ENCODE measurements at regions of chr1 and their contacts with region 1.

Region 1: GRCh38 chr1:31444725-31445448 is 31.9 kb downstream of the SERINC2 start:
- DNase-seq: peak; percentile 97
- ATAC-seq: peak; percentile 68
- H3K4me3 ChIP-seq: peak overlapping the region in 1 of 3 experiments; percentile 23; a peak in 1 of 6 replicates
- H3K27ac ChIP-seq: peak overlapping the region; percentile 78
- H3K4me1 ChIP-seq: peaks cover 97% of the 10 kb centered on the region
- H3K27me3 ChIP-seq: no peaks in the 10 kb centered on the region
- CTCF ChIP-seq: no peak
- EP300 ChIP-seq: peak in 1 of 2 experiments; percentile 92; a peak in 2 of 4 replicates
- POLR2A ChIP-seq: no peak
- RAD21 ChIP-seq: no peak

Region 2: GRCh38 chr1:31434171-31434871 is 10.6 kb before region 1 on chr1:
- CTCF ChIA-PET with region 1: no interaction called
- POLR2A ChIA-PET with region 1: interaction called, 16 read pairs
- in situ Hi-C with region 1: no loop called
- intact Hi-C with region 1: no loop called
- DNase-seq: peak; percentile 83
- ATAC-seq: peak; percentile 77
- H3K4me3 ChIP-seq: no peak overlapping the region
- H3K27ac ChIP-seq: peak overlapping the region; percentile 76
- H3K4me1 ChIP-seq: peaks cover 90% of the 10 kb centered on the region
- H3K27me3 ChIP-seq: no peaks in the 10 kb centered on the region
- CTCF ChIP-seq: peak; percentile 55
- EP300 ChIP-seq: peak in 1 of 2 experiments; percentile 88; a peak in 2 of 4 replicates
- POLR2A ChIP-seq: peak in 1 of 2 experiments; percentile 44; a peak in 1 of 4 replicates
- RAD21 ChIP-seq: no peak

Region 3: DNA sequence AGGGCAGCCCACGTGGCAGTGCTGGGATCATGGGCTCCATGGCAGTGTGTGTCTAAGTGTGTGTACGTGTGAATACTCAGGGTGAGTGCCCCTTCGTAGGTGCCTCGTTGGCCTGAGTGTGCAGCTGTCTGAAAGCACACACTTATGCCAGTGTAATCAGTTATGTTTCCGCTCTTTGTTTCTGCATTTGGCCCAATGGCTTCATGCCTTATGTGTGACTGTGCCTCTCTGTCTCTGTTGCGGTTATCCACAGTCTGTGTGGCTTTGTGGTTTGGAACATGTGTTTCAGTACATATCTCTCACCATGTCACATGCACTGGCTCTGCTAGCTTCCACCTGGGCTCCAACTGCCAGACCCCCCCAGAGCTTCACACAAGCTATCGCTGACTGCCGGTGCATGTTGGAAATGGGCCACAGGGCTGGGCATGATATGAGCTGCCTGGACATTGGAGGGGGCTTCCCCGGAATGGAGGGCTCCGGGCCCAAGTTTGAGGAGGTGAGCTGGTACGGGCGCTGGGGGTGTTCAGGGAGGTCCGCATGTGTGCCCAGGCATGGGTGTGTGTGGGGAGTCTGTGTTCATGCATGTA is 61.1 kb after region 1 on chr1:
- CTCF ChIA-PET with region 1: no interaction called
- POLR2A ChIA-PET with region 1: interaction called, 18 read pairs
- in situ Hi-C with region 1: no loop called
- intact Hi-C with region 1: loop called (anchors 10 kb)
- DNase-seq: no peak
- ATAC-seq: no peak
- H3K4me3 ChIP-seq: no peak overlapping the region
- H3K27ac ChIP-seq: no peak overlapping the region
- H3K4me1 ChIP-seq: peaks cover 70% of the 10 kb centered on the region
- H3K27me3 ChIP-seq: no peaks in the 10 kb centered on the region
- CTCF ChIP-seq: no peak
- EP300 ChIP-seq: no peak
- POLR2A ChIP-seq: no peak
- RAD21 ChIP-seq: no peak

Region 4: GRCh38 chr1:31510841-31511803 is 66.2 kb after region 1 on chr1:
- CTCF ChIA-PET with region 1: no interaction called
- POLR2A ChIA-PET with region 1: interaction called, 18 read pairs
- in situ Hi-C with region 1: no loop called
- intact Hi-C with region 1: loop called (anchors 10 kb)
- DNase-seq: peak; percentile 52
- ATAC-seq: peak; percentile 52
- H3K4me3 ChIP-seq: peak overlapping the region in 1 of 3 experiments; percentile 44; a peak in 2 of 6 replicates
- H3K27ac ChIP-seq: peak overlapping the region; percentile 98
- H3K4me1 ChIP-seq: peaks cover 97% of the 10 kb centered on the region
- H3K27me3 ChIP-seq: no peaks in the 10 kb centered on the region
- CTCF ChIP-seq: no peak
- EP300 ChIP-seq: 0 out of 4 replicates have a peak, but pooled peaks of 1 of the 2 experiments have one; percentile 43
- POLR2A ChIP-seq: peak in 1 of 2 experiments; percentile 49; a peak in 2 of 4 replicates
- RAD21 ChIP-seq: no peak

Measured in HepG2 (cell line).